Uterus (tissue), 4 donors: ENCODE measurements at regions of chr19 and their contacts with region 1.

Region 1: DNA sequence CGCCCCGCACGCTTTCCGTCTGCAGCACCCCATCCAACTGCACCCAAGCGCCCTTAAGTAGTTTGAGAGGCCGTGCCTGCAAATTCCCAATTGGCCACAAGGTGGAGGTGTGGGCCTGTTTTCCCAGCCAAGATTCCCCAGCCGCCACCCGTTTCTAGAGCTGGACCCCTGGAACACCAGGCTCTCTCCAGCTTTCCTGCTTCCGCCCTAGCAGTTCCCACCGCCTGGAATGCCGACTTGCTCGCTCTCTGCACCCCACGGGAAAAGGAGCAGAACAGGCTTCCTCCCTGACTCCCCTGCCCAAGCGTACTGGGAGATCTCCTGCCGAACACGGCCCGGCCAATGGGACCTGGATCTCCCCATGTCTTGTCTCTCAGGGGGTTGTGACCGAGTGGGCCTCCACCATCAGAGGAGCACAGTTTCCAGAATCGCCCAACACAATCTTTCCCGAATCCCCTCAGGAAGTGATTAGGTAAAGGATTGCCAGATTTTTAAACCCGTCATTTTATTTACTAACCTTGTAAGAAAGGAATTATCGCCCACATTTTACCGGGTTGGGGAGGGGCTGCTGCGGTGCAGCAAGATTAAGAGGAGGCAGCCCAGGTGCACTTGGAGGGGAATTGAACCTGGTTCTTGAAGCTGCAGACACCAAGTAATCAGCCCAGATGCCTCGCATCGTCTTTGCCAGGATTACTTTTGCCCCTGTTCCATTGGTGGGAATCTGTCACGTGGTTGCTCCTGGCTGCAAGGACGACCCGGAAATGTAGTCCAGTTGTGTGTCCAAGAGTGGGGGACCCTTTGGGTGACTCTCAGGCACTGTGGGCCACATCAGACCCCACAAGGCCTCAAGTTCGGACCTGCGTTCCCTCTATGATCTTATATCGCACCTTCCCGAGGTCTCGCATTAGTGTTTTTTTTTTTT is 3.5 kb upstream of the NAPSA start:
- DNase-seq: peak; percentile 85
- H3K4me3 ChIP-seq: peak overlapping the region; percentile 52 to 73
- H3K27ac ChIP-seq: peak overlapping the region; percentile 77 to 85
- H3K4me1 ChIP-seq: no peaks in the 10 kb centered on the region
- H3K27me3 ChIP-seq: no peaks in the 10 kb centered on the region
- CTCF ChIP-seq: peak; percentile 85 to 92 (median 90)
- POLR2A ChIP-seq: no peak

Region 2: DNA sequence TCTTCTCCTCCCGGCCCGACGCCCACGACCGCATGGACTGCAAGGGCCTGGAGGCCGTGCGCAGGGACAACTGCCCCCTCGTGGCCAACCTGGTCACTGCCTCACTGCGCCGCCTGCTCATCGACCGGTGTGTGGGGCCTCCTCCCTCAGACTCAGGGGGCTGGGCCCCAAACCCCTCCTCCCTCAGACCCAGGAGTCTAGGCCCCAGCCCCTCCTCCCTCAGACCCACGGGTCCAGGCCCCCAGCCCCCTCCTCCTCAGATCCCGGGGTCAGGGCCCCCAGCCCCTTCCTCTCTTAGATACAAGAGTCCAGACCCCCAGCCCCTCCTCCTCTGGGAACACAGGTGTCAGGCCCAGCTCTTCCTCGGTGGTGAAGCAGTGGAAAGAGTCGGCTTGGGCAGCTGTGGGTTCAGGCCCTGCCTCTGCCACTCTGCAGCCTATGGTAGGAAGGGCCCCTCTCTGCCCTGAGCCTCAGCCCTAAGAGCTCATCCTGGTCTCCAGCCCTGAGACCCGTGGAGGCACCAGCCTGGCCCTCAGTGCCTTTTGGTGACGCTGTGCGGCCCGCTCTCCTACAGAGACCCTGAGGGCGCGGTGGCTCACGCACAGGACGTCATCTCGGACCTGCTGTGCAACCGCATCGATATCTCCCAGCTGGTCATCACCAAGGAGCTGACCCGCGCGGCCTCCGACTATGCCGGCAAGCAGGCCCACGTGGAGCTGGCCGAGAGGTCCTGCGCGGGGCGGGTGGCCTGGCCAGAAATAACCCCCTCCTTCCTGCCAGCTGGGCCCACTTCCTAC is 46.2 kb after region 1 on chr19:
- intact Hi-C with region 1: loop called (anchors 5 kb)
- DNase-seq: peak; percentile 58 to 73
- H3K4me3 ChIP-seq: no peak overlapping the region
- H3K27ac ChIP-seq: no peak overlapping the region
- H3K4me1 ChIP-seq: no peaks in the 10 kb centered on the region
- H3K27me3 ChIP-seq: peaks cover 0 to 13% of the 10 kb centered on the region in 2 donors
- CTCF ChIP-seq: peak; percentile 76 to 82 (median 80)
- POLR2A ChIP-seq: no peak

Region 3: GRCh38 chr19:50431343-50432220 is 62.7 kb after region 1 on chr19:
- intact Hi-C with region 1: no loop called
- DNase-seq: peak; percentile 76 to 81
- H3K4me3 ChIP-seq: peak overlapping the region; percentile 36 to 42
- H3K27ac ChIP-seq: peak overlapping the region in 1 of 2 donors; percentile 20
- H3K4me1 ChIP-seq: no peaks in the 10 kb centered on the region
- H3K27me3 ChIP-seq: peaks cover 0 to 7% of the 10 kb centered on the region in 2 donors
- CTCF ChIP-seq: no peak
- POLR2A ChIP-seq: no peak